AG04450 (cell line): ENCODE measurements at regions of chr17 and their contacts with region 1.

Region 1: GRCh38 chr17:60577147-60577915 is 22.7 kb upstream of the PPM1D start:
- DNase-seq: no peak
- H3K4me3 ChIP-seq: peak overlapping the region; percentile 33
- H3K27ac ChIP-seq: no peak overlapping the region
- H3K27me3 ChIP-seq: no peaks in the 10 kb centered on the region
- CTCF ChIP-seq: peak; percentile 13; the same call in 1 of the 2 replicates

Region 2: GRCh38 chr17:60421273-60421934 is 155.9 kb before region 1 on chr17:
- CTCF ChIA-PET with region 1: no interaction called
- POLR2A ChIA-PET with region 1: no interaction called
- DNase-seq: no peak
- H3K4me3 ChIP-seq: peak overlapping the region; percentile 57
- H3K27ac ChIP-seq: no peak overlapping the region
- H3K27me3 ChIP-seq: no peaks in the 10 kb centered on the region
- CTCF ChIP-seq: peak; percentile 81

Region 3: GRCh38 chr17:60545465-60546454 is 31.6 kb before region 1 on chr17:
- CTCF ChIA-PET with region 1: no interaction called
- POLR2A ChIA-PET with region 1: no interaction called
- DNase-seq: no peak
- H3K4me3 ChIP-seq: no peak overlapping the region
- H3K27ac ChIP-seq: no peak overlapping the region
- H3K27me3 ChIP-seq: no peaks in the 10 kb centered on the region
- CTCF ChIP-seq: no peak

Region 4: GRCh38 chr17:60599620-60600489 is 22.5 kb after region 1 on chr17 and contains the start of gene PPM1D:
- CTCF ChIA-PET with region 1: interaction called, 7 read pairs
- POLR2A ChIA-PET with region 1: interaction called, 10 read pairs
- DNase-seq: peak; percentile 98
- H3K4me3 ChIP-seq: peak within 1 kb of the TSS; percentile 99
- H3K27ac ChIP-seq: peak within 1 kb of the TSS; percentile 94
- H3K27me3 ChIP-seq: no peaks in the 10 kb centered on the region
- CTCF ChIP-seq: no peak
- polyA plus RNA-seq, gene PPM1D: 8.0 and 12.2 TPM in 2 replicates